Dendritic cell treated with granulocyte-macrophage colony-stimulating factor and Interleukin-4, amounts not matched to agents 40 ng/mL and 50 ng/mL, for 4 days (primary cell): ENCODE measurements at regions of chr5 and their contacts with region 1.

Region 1: DNA sequence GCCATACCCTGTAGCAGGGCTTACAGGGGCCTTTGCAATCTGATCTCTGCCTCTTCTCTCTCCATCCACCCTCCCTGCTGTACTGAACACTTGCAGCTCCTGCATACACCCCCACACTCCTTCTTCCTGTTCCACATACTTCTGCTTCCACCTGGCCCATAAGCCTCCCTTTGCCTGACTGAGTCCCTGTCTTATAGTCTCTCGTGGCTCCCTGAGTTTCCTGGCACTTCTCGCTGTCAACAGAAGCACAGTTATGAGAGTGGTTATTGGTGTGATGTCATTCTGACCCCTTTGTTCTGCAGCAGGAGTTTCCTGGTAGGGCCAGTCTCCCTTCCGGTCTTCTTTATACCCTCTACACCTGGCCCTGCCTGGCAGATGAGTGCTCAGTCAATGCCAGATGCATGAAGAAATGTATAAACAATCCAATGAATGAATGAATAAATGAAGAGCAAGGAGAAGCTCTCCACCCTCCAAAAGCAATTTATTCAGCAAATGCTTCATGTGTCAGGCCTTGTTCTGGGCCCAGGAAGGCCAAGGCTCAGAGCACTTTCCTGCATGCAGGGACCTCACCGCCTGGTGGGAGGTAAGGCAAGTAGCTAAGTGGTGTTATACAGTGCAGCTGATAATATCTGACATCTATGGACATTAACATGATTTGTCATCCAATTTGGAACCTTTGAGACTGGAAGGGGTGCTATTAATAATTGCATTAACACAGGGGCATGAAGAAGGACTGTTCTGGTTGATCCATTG is 20.5 kb upstream of the CSF1R start:
- H3K4me3 Mint-ChIP-seq: no peak overlapping the region
- H3K27ac Mint-ChIP-seq: peak overlapping the region; percentile 71
- H3K4me1 Mint-ChIP-seq: peaks cover 83% of the 10 kb centered on the region
- H3K27me3 Mint-ChIP-seq: no peaks in the 10 kb centered on the region

Region 2: DNA sequence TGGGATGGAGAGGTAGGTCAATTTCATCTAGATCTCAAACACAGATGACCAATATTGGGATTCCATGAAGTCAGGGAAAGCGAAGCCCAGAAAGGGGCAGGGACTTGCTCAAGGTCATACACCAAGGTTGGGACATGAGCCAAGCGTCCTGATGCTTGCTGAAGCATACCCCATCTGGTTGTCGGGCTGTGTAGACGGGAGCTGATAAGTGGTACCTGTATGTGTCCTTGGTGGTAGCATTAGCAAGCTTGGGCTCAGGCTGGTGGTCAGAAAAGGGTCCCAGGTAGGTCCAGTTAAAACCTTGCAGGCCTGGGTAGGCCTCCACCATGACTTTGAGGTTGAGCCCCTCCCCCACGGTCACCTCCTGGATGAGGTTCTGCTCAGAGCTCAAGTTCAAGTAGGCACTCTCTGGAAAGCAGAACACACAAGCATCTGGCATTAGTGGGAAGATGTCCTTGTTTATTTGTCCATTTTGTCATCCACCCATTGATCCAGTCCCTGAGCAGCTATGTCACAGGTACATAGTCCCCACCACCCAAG is 33.7 kb before region 1 on chr5:
- intact Hi-C with region 1: loop called (anchors 5 kb)
- H3K4me3 Mint-ChIP-seq: no peak overlapping the region
- H3K27ac Mint-ChIP-seq: no peak overlapping the region
- H3K4me1 Mint-ChIP-seq: peaks cover 26% of the 10 kb centered on the region
- H3K27me3 Mint-ChIP-seq: no peaks in the 10 kb centered on the region